GM18951 (cell line): ENCODE measurements at regions of chr7 and their contacts with region 1.

Region 1: GRCh38 chr7:155804897-155805825 is 7.1 kb downstream of the SHH start:
- POLR2A ChIP-seq: no peak

Region 2: GRCh38 chr7:155269766-155270585 is 535.2 kb before region 1 on chr7:
- in situ Hi-C with region 1: no loop called
- POLR2A ChIP-seq: no peak

Region 3: GRCh38 chr7:156380261-156380660 is 575.1 kb after region 1 on chr7:
- in situ Hi-C with region 1: no loop called
- POLR2A ChIP-seq: no peak

Region 4: DNA sequence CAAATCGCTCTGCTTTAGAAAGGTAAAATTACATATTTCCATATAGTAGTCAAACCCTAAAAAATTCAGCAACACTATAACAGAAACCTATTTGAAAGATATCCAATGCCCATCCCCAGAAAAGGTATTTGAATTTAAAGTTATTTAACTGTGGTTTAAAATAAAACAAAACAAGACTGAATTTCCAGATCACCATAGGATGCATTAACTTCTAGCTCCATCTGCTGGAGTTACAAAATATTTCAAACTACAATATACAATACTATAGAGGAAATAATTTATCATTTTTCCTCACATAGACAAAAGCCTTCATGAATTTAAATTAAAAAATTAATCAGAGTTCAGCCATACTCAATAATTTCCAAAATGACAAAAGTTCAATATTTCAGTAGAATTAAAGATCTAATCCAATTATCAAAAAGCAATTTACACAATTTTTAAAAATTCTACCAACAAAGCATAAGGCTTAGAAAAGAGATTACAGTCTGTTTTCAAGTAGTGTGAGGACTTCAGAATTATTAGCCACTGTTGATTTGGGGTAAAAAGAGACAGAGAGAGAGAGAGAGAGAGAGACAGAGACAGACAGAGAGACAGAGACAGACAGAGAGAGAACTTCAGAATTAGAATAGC is 1011.9 kb after region 1 on chr7:
- in situ Hi-C with region 1: loop called (anchors 10 kb)
- POLR2A ChIP-seq: no peak